ENCODE measurements at regions of chr19 and their contacts with region 1.

Region 1: GRCh38 chr19:33778089-33778791 is 18.4 kb upstream of the KCTD15 start:
- DNase-seq: peak; percentile 96
- H3K4me3 Mint-ChIP-seq: peak overlapping the region; percentile 2
- H3K27ac Mint-ChIP-seq: no peak overlapping the region
- H3K4me1 Mint-ChIP-seq: peaks cover 10% of the 10 kb centered on the region
- H3K27me3 Mint-ChIP-seq: peaks cover 12% of the 10 kb centered on the region

Region 2: DNA sequence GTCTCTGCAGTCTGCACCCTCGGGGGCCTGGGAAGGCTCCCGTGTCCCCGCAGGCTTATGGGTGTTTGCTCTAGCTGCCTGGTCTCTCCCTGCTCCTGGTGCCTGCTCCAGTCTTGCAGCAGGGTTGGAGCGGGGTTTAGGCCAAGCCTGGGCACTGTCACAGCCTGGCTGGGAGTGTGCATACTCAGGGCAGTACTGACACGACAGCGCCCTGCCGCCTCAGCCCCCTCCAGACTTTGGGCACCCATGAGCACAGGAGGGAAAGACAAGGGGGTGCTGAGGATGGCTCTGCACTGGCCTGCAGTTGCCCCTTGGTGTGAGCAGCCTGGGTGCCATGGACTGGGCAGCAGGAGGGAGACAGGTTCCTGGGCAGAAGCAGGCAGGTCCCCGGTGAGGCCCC is 842.2 kb before region 1 on chr19:
- intact Hi-C with region 1: no loop called
- DNase-seq: no peak
- H3K4me3 Mint-ChIP-seq: no peak overlapping the region
- H3K27ac Mint-ChIP-seq: no peak overlapping the region
- H3K4me1 Mint-ChIP-seq: no peaks in the 10 kb centered on the region
- H3K27me3 Mint-ChIP-seq: no peaks in the 10 kb centered on the region

Region 3: GRCh38 chr19:33558856-33559255 is 219.4 kb before region 1 on chr19:
- intact Hi-C with region 1: no loop called
- DNase-seq: no peak
- H3K4me3 Mint-ChIP-seq: no peak overlapping the region
- H3K27ac Mint-ChIP-seq: no peak overlapping the region
- H3K4me1 Mint-ChIP-seq: no peaks in the 10 kb centered on the region
- H3K27me3 Mint-ChIP-seq: no peaks in the 10 kb centered on the region

Region 4: DNA sequence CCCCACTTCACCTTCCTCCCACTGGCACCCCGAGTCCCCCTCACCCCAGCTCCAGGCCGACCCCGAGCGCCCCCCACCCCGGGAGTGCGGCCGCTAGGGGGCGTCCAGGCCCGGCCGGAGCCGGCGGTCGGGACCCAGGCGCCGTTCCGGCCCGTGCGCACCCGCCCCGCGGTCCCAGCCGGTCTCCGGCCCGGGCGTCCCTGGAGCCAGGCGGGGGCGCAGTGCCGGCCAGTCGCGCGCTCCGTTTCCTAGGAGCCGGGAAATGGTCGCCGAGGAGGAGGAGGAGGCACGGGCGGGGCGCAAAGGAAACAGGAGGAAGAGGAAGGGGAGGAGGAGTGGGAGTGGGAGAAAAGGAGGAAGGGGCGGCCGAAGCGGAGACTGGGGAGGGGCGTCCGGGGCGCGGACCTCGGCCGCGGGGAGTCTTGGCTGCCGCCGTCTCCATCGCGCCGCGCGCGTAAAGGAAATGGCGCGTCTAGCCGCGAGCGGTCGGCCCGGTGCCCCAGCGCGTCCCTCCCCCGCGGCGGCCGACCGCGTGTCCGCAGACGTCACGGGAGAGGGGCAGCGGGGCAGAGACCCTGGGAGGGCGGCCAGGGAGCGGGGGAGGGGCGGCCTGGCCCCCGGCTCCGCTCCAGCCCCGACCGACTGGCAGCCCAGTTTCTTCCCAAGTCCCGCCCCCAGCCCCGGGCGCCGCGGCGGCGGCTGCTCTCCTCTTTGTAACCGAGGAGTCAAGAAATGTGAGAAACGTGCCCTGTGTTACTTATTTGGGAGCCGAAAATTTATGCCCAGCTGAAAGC is 17.3 kb after region 1 on chr19:
- intact Hi-C with region 1: loop called (anchors 1 kb)
- DNase-seq: peak; percentile 87
- H3K4me3 Mint-ChIP-seq: peak overlapping the region; percentile 79
- H3K27ac Mint-ChIP-seq: peak overlapping the region; percentile 77
- H3K4me1 Mint-ChIP-seq: peaks cover 1% of the 10 kb centered on the region
- H3K27me3 Mint-ChIP-seq: peaks cover 38% of the 10 kb centered on the region

Region 5: DNA sequence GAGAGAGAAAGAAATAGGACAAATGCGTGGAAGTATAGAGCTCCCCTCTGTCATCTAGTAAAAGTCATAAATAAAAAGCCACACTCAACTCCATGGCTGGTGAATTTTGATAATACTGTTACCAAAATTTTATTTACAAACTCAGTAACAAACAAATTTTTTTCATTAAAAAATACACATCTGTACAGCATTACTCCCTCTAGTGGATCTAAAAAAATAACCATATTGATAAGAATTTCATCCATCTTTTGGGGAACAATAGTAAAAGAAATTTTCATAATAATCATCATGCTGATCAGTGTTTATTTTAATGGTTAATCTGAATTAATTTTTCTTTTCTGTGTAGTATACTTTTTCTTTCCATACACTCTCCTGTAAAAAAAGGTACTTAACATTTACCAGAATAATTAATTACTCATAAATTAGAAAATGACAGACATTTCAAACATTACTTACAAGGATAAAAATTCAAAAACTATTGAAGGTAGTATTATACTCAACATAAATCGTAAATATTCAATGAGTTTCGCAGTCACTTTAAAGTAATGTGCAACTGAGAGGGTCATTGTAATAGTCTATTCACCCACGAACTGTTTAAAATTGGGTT is 220.6 kb after region 1 on chr19:
- intact Hi-C with region 1: loop called (anchors 5 kb)
- DNase-seq: no peak
- H3K4me3 Mint-ChIP-seq: no peak overlapping the region
- H3K27ac Mint-ChIP-seq: no peak overlapping the region
- H3K4me1 Mint-ChIP-seq: no peaks in the 10 kb centered on the region
- H3K27me3 Mint-ChIP-seq: peaks cover 9% of the 10 kb centered on the region

Region 6: GRCh38 chr19:34096020-34096915 is 318.0 kb after region 1 on chr19:
- intact Hi-C with region 1: loop called (anchors 2 kb)
- DNase-seq: peak; percentile 61
- H3K4me3 Mint-ChIP-seq: no peak overlapping the region
- H3K27ac Mint-ChIP-seq: no peak overlapping the region
- H3K4me1 Mint-ChIP-seq: no peaks in the 10 kb centered on the region
- H3K27me3 Mint-ChIP-seq: peaks cover 8% of the 10 kb centered on the region

Region 7: DNA sequence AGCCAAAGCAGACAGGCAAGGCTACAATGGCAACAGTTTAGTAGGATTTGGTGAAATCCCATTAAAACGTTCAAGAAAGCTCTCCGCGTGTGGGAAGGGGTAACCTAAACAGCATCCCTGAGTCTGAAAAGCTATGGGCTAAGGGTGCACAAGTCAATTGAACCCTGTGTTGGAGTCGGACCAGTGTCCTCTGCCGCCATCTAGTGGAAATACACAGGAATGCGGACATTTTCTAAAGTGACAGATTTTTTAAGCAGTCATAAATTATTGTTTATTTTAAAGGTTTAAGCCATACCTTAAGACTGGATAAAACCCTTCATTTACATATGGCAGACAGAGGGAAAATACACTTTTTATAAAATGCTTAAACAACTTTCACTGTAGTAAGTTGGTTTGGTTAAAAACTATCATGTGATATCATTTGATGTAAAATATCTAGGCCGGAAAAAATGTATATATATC is 367.5 kb after region 1 on chr19:
- intact Hi-C with region 1: loop called (anchors 5 kb)
- DNase-seq: peak; percentile 87
- H3K4me3 Mint-ChIP-seq: no peak overlapping the region
- H3K27ac Mint-ChIP-seq: no peak overlapping the region
- H3K4me1 Mint-ChIP-seq: peaks cover 2% of the 10 kb centered on the region
- H3K27me3 Mint-ChIP-seq: no peaks in the 10 kb centered on the region

Measured in activated CD4-positive, alpha-beta T cell treated with anti-CD3 and anti-CD28 coated beads, Interleukin-2, amount 10 ng/mL, durations not matched to agents 24 days and 14 days (primary cell).